Spleen (tissue), 13 donors: ENCODE measurements at regions of chr2 and their contacts with region 1.

Region 1: GRCh38 chr2:196160101-196160500 is 11.3 kb downstream of the STK17B start:
- DNase-seq: no peak
- H3K4me3 ChIP-seq: peak overlapping the region in 3 of 8 donors; percentile 14 to 51 (median 17)
- H3K27ac ChIP-seq: peak overlapping the region; percentile 49 to 100 (median 98)
- H3K4me1 ChIP-seq: peaks cover 16 to 100% (median 93%) of the 10 kb centered on the region in 6 donors
- H3K27me3 ChIP-seq: no peaks in the 10 kb centered on the region
- CTCF ChIP-seq: no peak
- POLR2A ChIP-seq: peak in 1 of 3 donors; percentile 53

Region 2: GRCh38 chr2:196277002-196277401 is 116.9 kb after region 1 on chr2:
- intact Hi-C with region 1: loop called (anchors 10 kb)
- DNase-seq: no peak
- H3K4me3 ChIP-seq: peak overlapping the region in 1 of 8 donors; percentile 53
- H3K27ac ChIP-seq: peak overlapping the region in 7 of 8 donors; percentile 19 to 88 (median 76)
- H3K4me1 ChIP-seq: peaks cover 37 to 52% (median 40%) of the 10 kb centered on the region in 6 donors
- H3K27me3 ChIP-seq: no peaks in the 10 kb centered on the region
- CTCF ChIP-seq: peak; percentile 30 to 82 (median 72)
- POLR2A ChIP-seq: no peak

Region 3: GRCh38 chr2:196331143-196331542 is 171.0 kb after region 1 on chr2:
- intact Hi-C with region 1: no loop called
- DNase-seq: no peak
- H3K4me3 ChIP-seq: no peak overlapping the region
- H3K27ac ChIP-seq: peak overlapping the region in 4 of 8 donors; percentile 8 to 41 (median 34)
- H3K4me1 ChIP-seq: peaks cover 0 to 5% (median 0%) of the 10 kb centered on the region in 6 donors
- H3K27me3 ChIP-seq: no peaks in the 10 kb centered on the region
- CTCF ChIP-seq: no peak
- POLR2A ChIP-seq: no peak

Region 4: DNA sequence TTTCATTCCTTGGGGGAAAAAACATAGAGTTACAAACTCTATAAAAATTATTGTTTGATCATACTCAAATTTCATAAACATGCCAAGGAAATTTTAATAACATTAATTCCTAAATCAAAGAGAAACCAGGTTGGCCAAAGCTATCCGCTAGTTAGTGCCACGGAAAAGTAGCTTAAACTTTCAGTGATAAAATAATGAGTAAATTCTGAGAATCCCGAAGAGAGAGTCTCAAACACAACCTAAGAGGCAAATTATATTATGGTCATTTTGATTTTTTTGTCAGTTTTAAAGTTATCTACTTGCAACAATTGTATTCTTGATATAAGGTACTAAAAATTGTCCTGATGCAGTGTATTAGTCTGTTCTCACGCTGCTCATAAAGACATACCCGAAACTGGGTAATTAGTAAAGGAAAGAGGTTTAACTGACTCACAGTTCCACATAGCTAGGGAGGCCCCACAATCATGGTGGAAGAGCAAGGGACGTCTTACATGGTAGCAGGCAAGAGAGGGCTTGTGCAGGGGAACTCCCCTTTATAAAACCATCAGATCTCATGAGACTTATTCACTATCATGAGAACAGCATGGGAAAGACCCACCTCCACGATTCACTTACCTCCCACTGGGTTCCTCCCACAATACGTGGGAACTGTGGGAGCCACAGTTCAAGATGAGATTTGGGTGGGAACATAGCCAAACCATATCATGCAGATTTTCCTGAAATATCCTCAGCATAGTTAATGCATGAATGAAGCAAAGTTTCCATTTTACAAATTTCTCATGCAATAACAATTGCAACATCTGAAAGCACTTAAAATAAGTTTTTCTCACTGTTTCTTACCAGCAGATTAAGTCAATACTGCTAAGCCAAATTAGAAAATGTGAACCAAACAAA is 217.1 kb after region 1 on chr2:
- intact Hi-C with region 1: no loop called
- DNase-seq: no peak
- H3K4me3 ChIP-seq: no peak overlapping the region
- H3K27ac ChIP-seq: no peak overlapping the region
- H3K4me1 ChIP-seq: peaks cover 0 to 43% (median 9%) of the 10 kb centered on the region in 6 donors
- H3K27me3 ChIP-seq: no peaks in the 10 kb centered on the region
- CTCF ChIP-seq: no peak
- POLR2A ChIP-seq: no peak